ENCODE measurements at regions of chr7 and their contacts with region 1.

Region 1: DNA sequence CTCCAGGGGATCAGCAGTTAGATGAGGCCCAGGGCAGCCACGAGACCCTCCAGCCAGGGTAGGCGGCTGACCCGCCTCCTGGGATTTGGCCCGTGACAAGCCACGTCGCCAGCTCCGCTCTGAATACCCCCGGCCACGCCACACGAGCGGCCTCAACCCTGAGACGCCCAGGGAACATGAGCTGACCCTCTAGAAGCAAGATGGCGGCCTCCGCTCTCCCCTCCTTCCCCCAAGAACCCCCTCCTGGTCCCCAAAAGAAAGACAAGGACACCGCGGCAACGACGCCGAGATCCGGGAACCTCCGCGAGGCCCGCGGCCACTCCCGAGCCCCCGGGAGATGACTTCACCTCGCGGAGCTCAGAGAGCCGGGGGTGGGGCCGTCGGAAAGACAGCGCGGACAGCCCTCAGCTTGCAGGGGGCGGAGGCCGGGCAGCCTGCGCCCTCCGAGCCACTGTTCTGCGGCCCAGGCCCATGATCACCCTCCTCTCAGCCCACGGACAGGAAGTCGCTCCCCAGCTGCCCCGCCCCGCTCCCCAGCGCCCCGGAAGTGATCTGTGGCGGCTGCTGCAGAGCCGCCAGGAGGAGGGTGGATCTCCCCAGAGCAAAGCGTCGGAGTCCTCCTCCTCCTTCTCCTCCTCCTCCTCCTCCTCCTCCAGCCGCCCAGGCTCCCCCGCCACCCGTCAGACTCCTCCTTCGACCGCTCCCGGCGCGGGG is at the start of gene RALA:
- DNase-seq: peak; percentile 85
- H3K4me3 Mint-ChIP-seq: peak within 1 kb of the TSS; percentile 99
- H3K27ac Mint-ChIP-seq: peak within 1 kb of the TSS; percentile 92
- H3K4me1 Mint-ChIP-seq: peaks cover 36% of the 10 kb centered on the region
- H3K27me3 Mint-ChIP-seq: peaks cover 8% of the 10 kb centered on the region
- total RNA-seq, gene RALA: 33.1 and 35.3 TPM in 2 replicates

Region 2: DNA sequence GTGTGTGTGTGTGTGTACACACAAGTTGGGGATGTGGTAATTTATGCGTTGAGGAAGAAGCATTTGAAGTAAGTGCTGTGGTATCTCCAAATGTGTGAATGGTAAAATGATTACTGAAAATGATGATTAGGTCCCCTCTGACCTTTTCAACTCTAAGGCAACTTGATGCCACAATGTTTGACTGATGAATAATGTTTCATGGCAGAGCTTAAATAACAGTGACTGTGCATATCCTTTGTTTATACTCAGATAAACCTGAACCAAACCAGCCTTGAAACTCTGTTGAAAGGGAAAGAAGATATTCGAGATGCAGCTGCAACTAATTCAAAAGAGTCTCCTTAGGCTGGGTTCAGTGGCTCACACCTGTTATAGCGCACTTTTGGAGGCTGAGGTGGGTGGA is 121.8 kb before region 1 on chr7:
- intact Hi-C with region 1: no loop called
- DNase-seq: no peak
- H3K4me3 Mint-ChIP-seq: no peak overlapping the region
- H3K27ac Mint-ChIP-seq: no peak overlapping the region
- H3K4me1 Mint-ChIP-seq: no peaks in the 10 kb centered on the region
- H3K27me3 Mint-ChIP-seq: peaks cover 9% of the 10 kb centered on the region

Region 3: DNA sequence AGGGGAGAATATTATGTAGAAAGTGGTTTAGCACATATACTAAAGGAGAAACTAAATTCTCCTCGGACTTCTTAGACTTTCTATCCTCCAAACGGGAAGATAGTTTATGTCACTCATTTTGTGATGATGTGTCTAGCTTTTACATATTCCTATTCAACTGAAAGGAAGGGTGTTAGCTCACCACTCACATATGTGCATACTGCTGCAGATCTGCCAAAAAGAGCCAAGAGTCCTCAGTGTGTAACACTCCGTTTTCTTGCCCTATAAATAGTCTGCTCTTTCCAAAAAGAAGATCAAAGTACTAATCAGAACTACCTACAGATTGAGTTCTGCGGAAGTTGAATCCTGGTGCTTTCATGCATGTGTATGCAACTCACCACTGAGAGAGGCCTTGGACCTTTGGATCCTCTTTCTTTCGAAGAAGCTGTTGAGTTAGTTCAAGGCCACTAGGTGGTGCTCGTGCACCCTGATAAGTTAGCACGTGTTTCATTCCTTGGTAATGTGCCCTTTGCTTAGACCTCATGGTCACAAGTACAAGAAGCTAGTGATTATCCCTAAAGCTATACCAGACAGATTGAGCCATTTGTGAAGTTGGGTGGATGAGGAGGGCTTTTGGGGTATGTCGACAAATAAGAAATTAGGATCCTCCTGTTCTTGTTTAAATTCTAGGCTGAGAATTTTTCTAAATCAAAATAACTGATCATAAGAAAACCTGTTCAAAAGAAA is 42.9 kb before region 1 on chr7:
- intact Hi-C with region 1: loop called (anchors 1 kb)
- DNase-seq: peak; percentile 56
- H3K4me3 Mint-ChIP-seq: no peak overlapping the region
- H3K27ac Mint-ChIP-seq: peak overlapping the region; percentile 36
- H3K4me1 Mint-ChIP-seq: peaks cover 12% of the 10 kb centered on the region
- H3K27me3 Mint-ChIP-seq: no peaks in the 10 kb centered on the region

Region 4: GRCh38 chr7:39589323-39590111 is 33.7 kb before region 1 on chr7:
- intact Hi-C with region 1: loop called (anchors 1 kb)
- DNase-seq: peak; percentile 65
- H3K4me3 Mint-ChIP-seq: no peak overlapping the region
- H3K27ac Mint-ChIP-seq: peak overlapping the region; percentile 61
- H3K4me1 Mint-ChIP-seq: peaks cover 42% of the 10 kb centered on the region
- H3K27me3 Mint-ChIP-seq: peaks cover 2% of the 10 kb centered on the region

Region 5: GRCh38 chr7:39667341-39667923 is 44.3 kb after region 1 on chr7:
- intact Hi-C with region 1: loop called (anchors 5 kb)
- DNase-seq: no peak
- H3K4me3 Mint-ChIP-seq: no peak overlapping the region
- H3K27ac Mint-ChIP-seq: no peak overlapping the region
- H3K4me1 Mint-ChIP-seq: peaks cover 11% of the 10 kb centered on the region
- H3K27me3 Mint-ChIP-seq: no peaks in the 10 kb centered on the region

Region 6: DNA sequence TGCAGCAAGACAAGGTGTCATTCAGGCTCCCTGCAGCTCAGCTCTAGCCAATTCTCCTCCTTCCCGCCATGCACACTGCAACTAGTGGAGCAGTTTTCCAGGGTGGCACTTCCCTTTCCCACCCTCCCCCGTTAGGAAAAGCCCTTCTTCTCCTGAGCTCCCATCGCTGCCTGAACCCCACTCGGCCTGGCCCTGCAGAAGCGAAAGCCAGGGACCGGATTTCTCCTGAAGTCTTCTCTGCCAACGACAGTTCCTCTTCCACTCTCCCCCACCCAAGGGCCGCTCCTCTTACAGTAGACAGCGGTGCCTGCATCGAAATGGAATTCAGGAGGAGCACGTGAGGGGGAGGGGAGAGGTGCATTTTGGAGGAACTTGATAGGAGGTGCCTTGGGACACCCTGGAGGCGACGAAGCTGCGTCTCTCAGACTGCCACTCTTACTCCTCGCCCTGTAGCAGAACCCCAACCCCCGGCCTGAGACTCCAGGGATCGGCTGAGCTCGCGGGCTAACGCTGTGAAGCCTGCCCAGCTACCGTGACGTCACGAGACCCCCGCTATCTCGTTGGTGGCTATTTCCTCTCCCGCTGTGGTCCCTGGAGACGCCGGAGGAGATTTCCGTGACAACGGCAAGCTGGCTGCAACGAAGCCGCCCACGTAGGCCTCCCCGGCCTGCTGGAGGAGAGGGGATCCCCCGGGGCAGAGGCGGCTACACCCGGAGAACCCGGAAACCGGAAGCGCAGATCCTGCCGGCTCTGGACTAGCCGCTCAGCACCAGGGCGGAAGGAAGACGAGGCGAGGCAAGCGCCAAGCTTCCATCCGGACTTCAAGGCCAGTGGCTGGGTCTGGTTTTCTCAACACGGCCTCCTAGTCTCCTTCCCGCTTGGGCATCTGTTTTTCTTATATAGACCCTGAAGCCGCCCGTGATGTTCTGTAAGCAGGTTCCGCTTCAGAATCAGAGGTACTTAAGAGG is 109.9 kb after region 1 on chr7:
- intact Hi-C with region 1: loop called (anchors 1 kb)
- DNase-seq: peak; percentile 95
- H3K4me3 Mint-ChIP-seq: peak overlapping the region; percentile 85
- H3K27ac Mint-ChIP-seq: peak overlapping the region; percentile 81
- H3K4me1 Mint-ChIP-seq: peaks cover 33% of the 10 kb centered on the region
- H3K27me3 Mint-ChIP-seq: peaks cover 4% of the 10 kb centered on the region

Region 7: GRCh38 chr7:39937366-39938153 is 314.4 kb after region 1 on chr7:
- intact Hi-C with region 1: no loop called
- DNase-seq: no peak
- H3K4me3 Mint-ChIP-seq: no peak overlapping the region
- H3K27ac Mint-ChIP-seq: no peak overlapping the region
- H3K4me1 Mint-ChIP-seq: no peaks in the 10 kb centered on the region
- H3K27me3 Mint-ChIP-seq: peaks cover 9% of the 10 kb centered on the region

Region 8: GRCh38 chr7:40134428-40135316 is 511.5 kb after region 1 on chr7 and contains the starts of genes MPLKIP and SUGCT:
- intact Hi-C with region 1: loop called (anchors 5 kb)
- DNase-seq: peak; percentile 83
- H3K4me3 Mint-ChIP-seq: peak within 1 kb of the TSS; percentile 93
- H3K27ac Mint-ChIP-seq: peak within 1 kb of the TSS; percentile 93
- H3K4me1 Mint-ChIP-seq: peaks cover 17% of the 10 kb centered on the region
- H3K27me3 Mint-ChIP-seq: peaks cover 15% of the 10 kb centered on the region
- total RNA-seq, gene MPLKIP: 35.6 and 39.0 TPM in 2 replicates
- total RNA-seq, gene SUGCT: 0.43 and 1.2 TPM in 2 replicates